ENCODE measurements at regions of chr7 and their contacts with region 1.

Region 1: GRCh38 chr7:132318352-132319318 is 257.6 kb downstream of the PLXNA4 start:
- DNase-seq: peak; percentile 91 to 95 (median 93)
- H3K4me3 ChIP-seq: peak overlapping the region in 1 of 3 donors; percentile 5
- H3K27ac ChIP-seq: no peak overlapping the region
- H3K4me1 ChIP-seq: no peaks in the 10 kb centered on the region
- H3K27me3 ChIP-seq: no peaks in the 10 kb centered on the region
- CTCF ChIP-seq: peak; percentile 97

Region 2: GRCh38 chr7:131370523-131370968 is 948.1 kb before region 1 on chr7:
- intact Hi-C with region 1: no loop called
- DNase-seq: peak in 3 of 5 donors; percentile 24 to 52 (median 50)
- H3K4me3 ChIP-seq: no peak overlapping the region
- H3K27ac ChIP-seq: no peak overlapping the region
- H3K4me1 ChIP-seq: peaks cover 0 to 20% (median 2%) of the 10 kb centered on the region in 3 donors
- H3K27me3 ChIP-seq: no peaks in the 10 kb centered on the region
- CTCF ChIP-seq: no peak

Region 3: DNA sequence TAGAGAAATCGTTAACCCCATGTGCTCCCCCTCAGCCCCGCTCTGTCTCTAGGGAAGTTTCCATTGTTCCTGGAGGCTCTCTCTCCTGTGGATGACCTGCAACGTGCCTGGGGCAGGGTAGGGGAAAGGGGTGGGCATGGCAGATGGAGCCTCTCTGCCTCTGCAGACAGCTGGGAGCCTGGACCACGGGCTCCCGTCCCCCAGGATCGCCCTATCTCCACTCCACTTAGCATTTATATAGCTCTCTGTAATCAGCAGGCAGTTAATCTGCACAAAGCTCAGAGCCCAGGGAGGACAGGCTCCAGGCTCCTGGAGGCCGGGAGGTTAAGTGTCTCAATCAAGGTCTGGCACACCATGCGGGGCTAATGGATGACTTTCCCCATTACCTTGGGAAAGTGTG is 112.0 kb before region 1 on chr7:
- intact Hi-C with region 1: no loop called
- DNase-seq: peak in 1 of 5 donors; percentile 20
- H3K4me3 ChIP-seq: no peak overlapping the region
- H3K27ac ChIP-seq: no peak overlapping the region
- H3K4me1 ChIP-seq: no peaks in the 10 kb centered on the region
- H3K27me3 ChIP-seq: no peaks in the 10 kb centered on the region
- CTCF ChIP-seq: no peak

Region 4: DNA sequence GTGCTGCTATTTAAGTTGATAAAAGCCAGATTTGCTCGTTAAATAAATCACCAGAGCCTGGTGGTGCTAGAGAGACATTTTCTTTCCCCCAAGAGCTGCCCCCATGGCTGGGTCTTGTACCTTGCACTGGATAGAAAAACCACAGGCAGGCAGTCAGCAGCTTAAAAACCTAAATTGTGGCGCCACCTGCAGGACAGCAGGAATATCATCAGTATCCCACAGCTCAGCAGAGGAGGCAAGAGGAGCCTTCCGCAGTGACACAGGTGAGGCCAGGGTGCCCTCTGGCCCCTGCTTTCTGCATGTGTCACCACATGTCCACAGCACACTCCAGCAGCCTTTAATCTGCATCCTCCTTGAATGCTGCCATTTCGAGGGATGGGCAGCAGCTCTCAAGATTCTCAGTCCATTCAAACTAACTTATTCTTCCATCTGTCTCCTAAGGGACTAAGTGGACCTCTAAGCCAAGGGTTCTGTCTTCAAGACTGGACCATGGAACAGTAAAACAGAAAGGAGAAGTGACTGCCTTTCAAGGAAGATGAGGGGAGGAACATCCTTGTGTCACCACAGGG is 262.2 kb after region 1 on chr7:
- intact Hi-C with region 1: loop called (anchors 5 kb)
- DNase-seq: peak; percentile 79 to 94 (median 87)
- H3K4me3 ChIP-seq: no peak overlapping the region
- H3K27ac ChIP-seq: no peak overlapping the region
- H3K4me1 ChIP-seq: peaks cover 0 to 7% (median 0%) of the 10 kb centered on the region in 3 donors
- H3K27me3 ChIP-seq: no peaks in the 10 kb centered on the region
- CTCF ChIP-seq: peak; percentile 87